ENCODE measurements at regions of chr7 and their contacts with region 1.

Region 1: DNA sequence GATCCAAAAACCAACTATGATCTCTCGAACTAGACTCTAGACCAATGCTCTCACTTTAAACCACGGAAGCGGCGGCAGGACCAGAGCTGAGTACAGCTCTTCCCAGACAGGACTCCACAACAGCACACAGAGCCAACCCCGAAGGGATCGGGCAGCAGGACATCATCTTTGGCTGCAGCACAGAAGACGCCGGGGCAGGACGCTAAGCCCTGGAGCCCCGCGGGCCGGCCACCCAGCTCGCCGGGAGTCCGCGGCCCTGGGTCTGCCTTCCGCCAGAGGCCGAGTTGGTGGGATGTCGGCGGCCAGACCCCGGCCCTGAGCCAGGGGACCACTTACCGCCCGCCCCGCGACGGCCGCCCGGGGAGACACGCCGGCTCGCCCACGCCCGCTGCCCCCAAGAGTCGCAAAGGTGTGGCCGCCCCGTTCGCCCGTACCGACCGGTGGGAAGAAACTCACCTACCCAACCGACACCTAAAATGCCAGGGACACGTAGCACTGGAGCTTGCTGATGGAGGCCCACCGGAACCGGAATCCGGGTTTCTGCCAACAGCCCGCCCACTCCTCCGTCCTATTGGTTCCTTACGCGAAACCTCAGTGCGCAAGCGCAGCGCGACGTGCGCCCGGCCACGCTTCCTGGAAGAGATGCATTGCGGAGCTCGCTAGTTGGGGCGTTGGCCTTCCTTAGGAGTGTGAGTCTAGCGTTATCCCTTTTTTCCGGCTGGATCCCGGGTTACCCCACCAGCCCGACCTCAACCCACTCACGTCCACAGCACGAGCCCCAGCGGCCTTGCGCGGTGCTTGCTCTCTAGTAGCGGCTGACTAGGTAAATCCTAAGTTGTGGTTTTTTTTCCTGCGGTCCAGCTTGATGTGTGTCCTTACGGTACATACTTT is at the start of gene SEC61G:
- DNase-seq: peak; percentile 95
- H3K4me3 ChIP-seq: peak within 1 kb of the TSS; percentile 71 to 95 (median 90)
- H3K27ac ChIP-seq: peak within 1 kb of the TSS; percentile 96
- H3K4me1 ChIP-seq: peaks cover 11% of the 10 kb centered on the region
- H3K27me3 ChIP-seq: no peaks in the 10 kb centered on the region
- CTCF ChIP-seq: no peak
- total RNA-seq, gene SEC61G: 156 to 174 TPM

Region 2: GRCh38 chr7:54546081-54546985 is 212.6 kb before region 1 on chr7:
- CTCF ChIA-PET with region 1: no interaction called
- dilution Hi-C with region 1: no loop called
- in situ Hi-C with region 1: no loop called
- intact Hi-C with region 1: loop called (anchors 5 kb)
- DNase-seq: no peak
- H3K4me3 ChIP-seq: peak overlapping the region in 2 of 3 experiments; percentile 23 to 25
- H3K27ac ChIP-seq: no peak overlapping the region
- H3K4me1 ChIP-seq: peaks cover 12% of the 10 kb centered on the region
- H3K27me3 ChIP-seq: peaks cover 56% of the 10 kb centered on the region
- CTCF ChIP-seq: peak; percentile 7 to 44

Region 3: DNA sequence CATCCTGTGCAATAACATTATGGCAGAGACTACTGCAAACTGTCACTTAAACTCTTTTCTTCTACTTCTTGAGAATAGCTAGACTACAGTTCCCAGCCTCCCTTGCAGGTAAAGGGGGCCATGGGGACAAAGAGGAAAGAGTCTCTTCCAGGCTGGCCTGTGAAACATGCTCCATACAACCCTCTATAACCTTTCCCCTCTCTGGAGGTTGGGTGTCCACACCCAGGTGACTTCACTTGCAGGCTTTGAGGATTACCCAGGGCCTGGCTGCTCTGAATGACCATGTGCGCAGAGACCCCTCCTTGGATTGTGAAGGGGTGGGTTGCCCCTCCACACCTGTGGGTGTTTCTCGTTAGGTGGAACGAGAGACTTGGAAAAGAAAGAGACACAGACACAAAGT is 84.1 kb before region 1 on chr7:
- CTCF ChIA-PET with region 1: no interaction called
- dilution Hi-C with region 1: no loop called
- in situ Hi-C with region 1: no loop called
- intact Hi-C with region 1: no loop called
- DNase-seq: no peak
- H3K4me3 ChIP-seq: no peak overlapping the region
- H3K27ac ChIP-seq: no peak overlapping the region
- H3K4me1 ChIP-seq: no peaks in the 10 kb centered on the region
- H3K27me3 ChIP-seq: peaks cover 11% of the 10 kb centered on the region
- CTCF ChIP-seq: no peak

Region 4: DNA sequence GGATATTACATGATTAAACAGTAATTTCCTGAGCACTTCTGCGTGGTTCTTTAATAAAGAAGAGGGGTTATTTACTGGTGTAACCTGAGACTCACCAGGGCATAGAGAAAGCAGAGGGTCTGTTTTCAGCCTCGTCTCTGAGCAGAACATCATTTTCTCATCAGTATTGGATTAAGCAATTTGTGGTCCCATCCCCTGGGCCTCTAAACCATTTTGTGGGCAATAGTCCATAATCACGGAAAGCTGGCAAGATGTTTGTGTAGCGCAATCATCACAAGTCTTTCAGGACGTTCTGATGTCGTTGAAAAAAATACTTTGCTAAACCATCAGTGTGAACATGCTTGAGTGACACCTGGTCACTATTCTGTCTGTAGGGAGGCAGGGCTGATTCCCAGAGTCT is 37.2 kb after region 1 on chr7:
- CTCF ChIA-PET with region 1: no interaction called
- dilution Hi-C with region 1: no loop called
- in situ Hi-C with region 1: no loop called
- intact Hi-C with region 1: no loop called
- DNase-seq: no peak
- H3K4me3 ChIP-seq: no peak overlapping the region
- H3K27ac ChIP-seq: no peak overlapping the region
- H3K4me1 ChIP-seq: peaks cover 3% of the 10 kb centered on the region
- H3K27me3 ChIP-seq: no peaks in the 10 kb centered on the region
- CTCF ChIP-seq: no peak

Region 5: GRCh38 chr7:54811041-54811845 is 52.3 kb after region 1 on chr7:
- CTCF ChIA-PET with region 1: no interaction called
- dilution Hi-C with region 1: no loop called
- in situ Hi-C with region 1: no loop called
- intact Hi-C with region 1: no loop called
- DNase-seq: peak; percentile 78
- H3K4me3 ChIP-seq: no peak overlapping the region
- H3K27ac ChIP-seq: peak overlapping the region; percentile 54
- H3K4me1 ChIP-seq: peaks cover 27% of the 10 kb centered on the region
- H3K27me3 ChIP-seq: no peaks in the 10 kb centered on the region
- CTCF ChIP-seq: no peak

Measured in mammary epithelial cell (primary cell).